ENCODE measurements at regions of chr1 and their contacts with region 1.

Region 1: GRCh38 chr1:45583264-45583665 is 576 bp upstream of the NASP start:
- DNase-seq: peak; percentile 98
- H3K4me3 Mint-ChIP-seq: peak overlapping the region; percentile 99
- H3K27ac Mint-ChIP-seq: peak overlapping the region; percentile 98
- H3K4me1 Mint-ChIP-seq: peaks cover 22% of the 10 kb centered on the region
- H3K27me3 Mint-ChIP-seq: no peaks in the 10 kb centered on the region

Region 2: GRCh38 chr1:44029906-44030604 is 1553.2 kb before region 1 on chr1:
- intact Hi-C with region 1: loop called (anchors 5 kb)
- DNase-seq: peak; percentile 97
- H3K4me3 Mint-ChIP-seq: peak overlapping the region; percentile 95
- H3K27ac Mint-ChIP-seq: peak overlapping the region; percentile 93
- H3K4me1 Mint-ChIP-seq: peaks cover 31% of the 10 kb centered on the region
- H3K27me3 Mint-ChIP-seq: no peaks in the 10 kb centered on the region

Region 3: DNA sequence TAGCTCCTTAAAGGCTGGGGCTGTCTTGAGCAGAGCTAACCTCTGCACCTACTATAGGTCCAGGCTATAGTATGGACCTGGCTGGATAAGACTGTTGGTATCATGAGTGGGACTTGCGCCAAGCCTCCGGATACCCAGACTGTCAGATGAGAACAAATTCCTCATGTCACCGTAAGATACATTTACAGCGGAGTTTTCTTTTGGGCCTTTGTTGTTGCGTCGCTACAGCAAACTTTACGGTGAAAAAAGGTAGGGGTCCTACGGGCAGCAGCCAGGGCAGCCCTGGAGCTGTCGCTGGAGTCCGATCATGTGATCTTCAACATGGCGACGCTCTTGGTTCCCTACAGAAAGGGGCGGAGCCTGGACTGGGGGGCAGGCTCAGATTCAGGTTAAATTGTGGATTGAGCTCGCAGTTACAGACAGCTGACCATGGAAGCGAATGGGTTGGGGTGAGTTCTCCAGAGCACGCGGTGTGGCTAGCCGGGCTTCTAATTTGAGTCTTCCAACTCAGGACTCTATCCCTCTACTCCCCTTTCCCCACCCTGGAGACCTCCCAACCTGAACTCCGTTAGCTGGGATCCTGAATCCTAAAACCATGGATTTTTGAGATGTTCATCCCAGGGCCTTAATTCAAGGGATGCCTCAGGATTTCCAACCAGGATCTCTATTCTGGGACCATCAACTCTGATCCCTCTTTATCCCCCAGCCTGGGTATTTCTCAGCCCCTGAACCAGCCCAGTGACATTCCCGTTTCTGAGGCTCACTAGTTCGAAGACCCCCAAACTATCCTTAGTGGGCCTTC is 571.2 kb before region 1 on chr1 and contains the start of gene UROD:
- intact Hi-C with region 1: loop called (anchors 2 kb)
- DNase-seq: peak; percentile 97
- H3K4me3 Mint-ChIP-seq: peak within 1 kb of the TSS; percentile 85
- H3K27ac Mint-ChIP-seq: peak within 1 kb of the TSS; percentile 91
- H3K4me1 Mint-ChIP-seq: peaks cover 52% of the 10 kb centered on the region
- H3K27me3 Mint-ChIP-seq: no peaks in the 10 kb centered on the region
- total RNA-seq, gene UROD: 96.0 and 97.7 TPM in 2 replicates

Region 4: GRCh38 chr1:45499415-45499769 is 83.9 kb before region 1 on chr1:
- intact Hi-C with region 1: loop called (anchors 1 kb)
- DNase-seq: peak; percentile 74
- H3K4me3 Mint-ChIP-seq: peak overlapping the region; percentile 95
- H3K27ac Mint-ChIP-seq: peak overlapping the region; percentile 90
- H3K4me1 Mint-ChIP-seq: peaks cover 30% of the 10 kb centered on the region
- H3K27me3 Mint-ChIP-seq: no peaks in the 10 kb centered on the region

Region 5: GRCh38 chr1:45550401-45551351 is 32.6 kb before region 1 on chr1 and contains the start of gene AKR1A1:
- intact Hi-C with region 1: loop called (anchors 1 kb)
- DNase-seq: peak; percentile 97
- H3K4me3 Mint-ChIP-seq: peak within 1 kb of the TSS; percentile 98
- H3K27ac Mint-ChIP-seq: peak within 1 kb of the TSS; percentile 94
- H3K4me1 Mint-ChIP-seq: peaks cover 17% of the 10 kb centered on the region
- H3K27me3 Mint-ChIP-seq: no peaks in the 10 kb centered on the region
- total RNA-seq, gene AKR1A1: 193 and 199 TPM in 2 replicates

Region 6: DNA sequence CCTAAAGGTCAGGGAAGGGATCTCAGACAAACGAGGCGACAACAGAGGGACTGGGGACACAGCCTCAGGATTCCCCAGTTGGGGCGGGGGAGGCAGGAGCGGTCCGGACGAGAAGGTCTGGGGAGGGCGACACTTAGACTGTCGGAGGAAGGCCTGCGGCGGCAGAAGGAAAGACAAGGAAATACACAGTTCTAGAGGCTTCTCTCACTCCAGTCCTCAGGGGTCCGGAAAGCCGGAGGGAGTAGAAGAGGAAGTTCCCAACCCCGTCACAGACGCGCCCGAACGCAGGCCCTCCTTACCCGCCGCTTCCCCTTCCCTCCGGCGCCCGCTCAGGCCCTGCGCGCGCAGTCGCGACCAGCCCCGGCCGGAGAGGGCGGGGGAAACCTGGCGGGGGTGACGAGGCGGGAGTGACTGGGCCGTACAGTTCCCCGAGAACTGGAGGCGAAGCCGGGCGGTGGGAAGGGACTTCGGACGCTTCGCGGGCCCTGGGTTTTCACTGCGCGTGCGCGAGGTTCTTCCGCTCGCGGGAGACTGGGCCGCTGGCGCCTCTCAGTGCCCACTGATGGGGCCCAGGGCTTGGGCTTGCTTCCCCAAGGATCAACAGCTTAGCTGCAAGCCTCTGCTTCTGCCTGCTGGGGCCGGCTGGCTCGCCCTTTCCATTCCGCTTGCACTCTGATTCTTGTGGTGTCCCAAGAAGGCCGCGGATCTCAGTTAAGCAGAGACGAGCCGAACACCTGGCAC is 167.2 kb after region 1 on chr1 and contains the start of gene IPP:
- intact Hi-C with region 1: loop called (anchors 1 kb)
- DNase-seq: peak; percentile 99
- H3K4me3 Mint-ChIP-seq: peak within 1 kb of the TSS; percentile 100
- H3K27ac Mint-ChIP-seq: peak within 1 kb of the TSS; percentile 97
- H3K4me1 Mint-ChIP-seq: peaks cover 14% of the 10 kb centered on the region
- H3K27me3 Mint-ChIP-seq: no peaks in the 10 kb centered on the region
- total RNA-seq, gene IPP: 13.8 and 15.3 TPM in 2 replicates

Region 7: DNA sequence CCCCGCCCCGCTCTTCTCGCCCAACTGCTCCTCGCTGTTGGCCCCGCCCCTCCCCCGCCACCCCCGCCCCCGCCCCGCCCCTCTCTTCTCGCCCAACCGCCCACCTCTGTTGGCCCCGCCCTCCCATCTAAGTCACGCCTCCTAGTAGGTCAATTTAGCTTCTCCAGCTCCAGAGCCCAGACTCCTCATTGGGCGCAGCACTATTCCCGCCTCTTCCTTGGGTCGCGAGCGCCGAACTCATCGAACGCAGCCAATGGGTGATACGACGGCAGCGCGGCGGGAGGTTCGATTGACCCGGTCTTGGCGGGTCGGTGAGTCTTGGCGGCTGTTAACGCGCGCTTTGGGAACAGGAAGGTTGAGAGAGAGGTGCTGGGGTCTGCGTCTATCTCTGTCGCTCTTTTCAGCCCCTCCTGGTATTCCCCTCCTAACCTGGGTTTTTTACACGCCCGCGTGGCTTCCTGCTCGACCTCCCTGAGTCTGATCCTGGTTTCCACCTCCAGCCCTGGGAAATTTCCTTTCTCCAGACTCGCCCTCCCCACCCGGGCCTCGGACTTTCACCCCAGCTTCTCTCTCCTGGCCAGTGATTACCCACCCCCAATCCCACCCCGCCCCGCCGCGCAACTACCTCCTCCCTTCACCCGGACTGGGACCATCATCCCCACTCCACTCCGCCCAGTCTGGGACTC is 664.3 kb after region 1 on chr1 and contains the start of gene RAD54L:
- intact Hi-C with region 1: loop called (anchors 10 kb)
- DNase-seq: peak; percentile 99
- H3K4me3 Mint-ChIP-seq: peak within 1 kb of the TSS; percentile 90
- H3K27ac Mint-ChIP-seq: peak within 1 kb of the TSS; percentile 96
- H3K4me1 Mint-ChIP-seq: peaks cover 36% of the 10 kb centered on the region
- H3K27me3 Mint-ChIP-seq: no peaks in the 10 kb centered on the region
- total RNA-seq, gene RAD54L: 55.5 and 59.6 TPM in 2 replicates

Region 8: DNA sequence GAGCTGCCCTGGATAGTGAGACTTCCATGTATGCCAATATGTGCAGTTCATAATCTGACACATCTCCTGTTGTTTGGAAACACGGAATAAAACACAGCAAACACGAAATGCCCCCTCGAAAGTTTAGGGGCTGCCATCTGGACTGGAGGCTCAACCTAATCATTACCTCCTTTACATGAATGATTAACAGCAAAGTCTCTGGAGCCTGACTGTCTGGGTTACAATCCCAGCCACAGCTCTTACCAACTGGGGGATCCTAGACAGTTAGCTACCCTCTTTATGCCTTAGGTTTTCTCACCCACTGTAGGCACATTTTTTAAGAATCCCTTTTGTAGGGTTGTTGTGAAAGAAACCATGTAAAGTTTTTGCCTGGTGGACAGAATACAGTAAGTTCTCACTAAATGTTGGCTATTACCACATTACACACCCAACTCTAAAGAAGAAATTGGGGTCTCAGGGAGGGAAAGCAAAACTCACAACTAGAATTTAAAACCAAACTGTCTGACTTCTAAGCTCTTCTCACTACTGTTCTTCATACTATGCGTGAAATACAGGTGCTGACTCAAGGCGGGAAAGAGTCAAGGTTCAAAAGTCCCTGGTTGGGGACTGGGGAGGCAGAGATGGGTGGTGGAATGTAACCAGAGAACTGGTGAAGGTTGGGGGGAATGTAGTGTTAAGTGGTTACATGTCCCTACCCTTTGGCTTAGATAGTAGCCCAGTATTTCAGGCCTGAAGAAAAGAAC is 1578.2 kb after region 1 on chr1:
- intact Hi-C with region 1: no loop called
- DNase-seq: no peak
- H3K4me3 Mint-ChIP-seq: no peak overlapping the region
- H3K27ac Mint-ChIP-seq: no peak overlapping the region
- H3K4me1 Mint-ChIP-seq: no peaks in the 10 kb centered on the region
- H3K27me3 Mint-ChIP-seq: peaks cover 19% of the 10 kb centered on the region